Caco-2 (cell line): ENCODE measurements at regions of chr4 and their contacts with region 1.

Region 1: DNA sequence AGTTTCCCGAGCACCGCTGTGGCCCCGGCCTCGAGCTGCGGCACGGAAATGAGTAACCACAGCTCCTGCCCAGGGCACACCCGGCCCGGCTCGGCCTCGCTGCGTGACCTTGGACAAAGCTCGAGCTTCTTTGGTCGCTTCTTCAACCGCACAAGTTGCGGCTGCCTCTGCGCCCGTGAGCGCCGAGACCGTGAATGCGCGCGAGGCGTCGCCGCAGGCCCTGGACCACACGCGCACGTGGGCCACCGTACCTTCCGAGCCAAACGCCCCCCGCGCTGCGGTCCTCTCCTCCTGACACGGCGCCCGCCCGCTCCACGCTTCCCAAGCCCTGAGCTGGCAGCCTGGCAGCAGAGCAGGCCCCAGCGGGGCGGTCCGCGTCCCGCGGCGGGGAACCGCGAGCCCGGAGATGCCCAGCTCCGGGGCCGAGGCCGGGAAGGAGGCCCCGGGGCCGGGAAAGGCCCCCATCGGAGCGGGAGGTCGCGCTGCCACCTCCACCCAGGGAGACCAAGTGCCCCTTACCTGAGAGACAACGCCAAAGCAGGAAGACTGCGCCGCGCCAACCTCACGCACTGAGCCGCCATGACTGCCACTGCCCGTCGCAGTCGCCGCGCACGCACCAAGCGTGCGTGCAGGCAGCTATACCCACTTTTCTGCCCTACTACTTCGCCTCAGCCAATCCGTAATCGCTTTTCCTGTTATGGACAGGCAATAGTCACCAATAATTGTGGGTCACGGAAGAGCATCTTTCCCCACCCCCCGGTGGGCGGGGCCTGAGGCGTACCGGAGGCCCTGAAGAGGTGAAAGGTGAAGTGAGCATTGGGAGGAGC is at the start of gene GRPEL1:
- DNase-seq: peak; percentile 99
- H3K4me3 ChIP-seq: peak within 1 kb of the TSS; percentile 77
- H3K4me3 Mint-ChIP-seq: peak within 1 kb of the TSS; percentile 90
- H3K27ac Mint-ChIP-seq: peak within 1 kb of the TSS; percentile 87
- H3K4me1 ChIP-seq: peaks cover 9% of the 10 kb centered on the region; the same call in 1 of the 2 replicates
- H3K4me1 Mint-ChIP-seq: peaks cover 14% of the 10 kb centered on the region
- H3K27me3 ChIP-seq: no peaks in the 10 kb centered on the region
- H3K27me3 Mint-ChIP-seq: no peaks in the 10 kb centered on the region
- CTCF ChIP-seq: no peak
- total RNA-seq, gene GRPEL1: 47.3 and 51.7 TPM in 2 replicates

Region 2: DNA sequence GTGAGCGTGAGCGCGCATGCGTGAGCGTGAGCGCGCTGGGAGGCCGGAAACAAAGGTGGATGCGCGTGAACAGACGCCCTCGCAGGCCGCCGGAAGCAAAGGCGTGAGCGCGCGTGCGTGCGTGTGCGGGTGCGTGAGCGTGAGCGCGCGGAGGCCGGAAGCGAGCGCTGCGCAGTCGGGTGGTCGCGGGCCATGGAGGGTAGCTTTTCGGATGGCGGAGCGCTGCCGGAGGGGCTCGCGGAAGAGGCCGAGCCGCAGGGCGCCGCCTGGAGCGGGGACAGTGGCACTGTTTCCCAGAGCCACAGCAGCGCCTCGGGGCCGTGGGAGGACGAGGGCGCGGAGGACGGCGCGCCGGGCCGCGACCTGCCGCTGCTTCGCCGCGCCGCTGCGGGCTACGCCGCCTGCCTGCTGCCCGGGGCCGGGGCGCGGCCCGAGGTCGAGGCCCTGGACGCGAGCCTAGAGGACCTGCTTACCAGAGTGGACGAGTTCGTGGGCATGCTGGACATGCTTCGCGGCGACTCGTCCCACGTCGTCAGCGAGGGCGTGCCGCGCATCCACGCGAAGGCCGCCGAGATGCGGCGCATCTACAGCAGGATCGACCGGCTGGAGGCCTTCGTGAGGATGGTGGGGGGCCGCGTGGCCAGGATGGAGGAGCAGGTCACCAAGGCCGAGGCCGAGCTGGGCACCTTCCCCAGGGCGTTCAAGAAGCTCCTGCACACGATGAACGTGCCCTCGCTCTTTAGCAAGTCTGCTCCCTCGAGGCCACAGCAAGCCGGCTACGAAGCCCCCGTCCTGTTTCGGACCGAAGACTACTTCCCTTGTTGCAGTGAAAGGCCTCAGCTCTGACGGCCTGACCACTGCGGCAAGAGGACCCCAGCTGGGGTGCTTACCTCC is 351.4 kb before region 1 on chr4 and contains the start of gene BLOC1S4:
- CTCF ChIA-PET with region 1: interaction called, 4 read pairs
- POLR2A ChIA-PET with region 1: no interaction called
- intact Hi-C with region 1: loop called (anchors 2 kb)
- DNase-seq: peak; percentile 85 to 88
- H3K4me3 ChIP-seq: peak within 1 kb of the TSS; percentile 83
- H3K4me3 Mint-ChIP-seq: peak within 1 kb of the TSS; percentile 96
- H3K27ac Mint-ChIP-seq: peak within 1 kb of the TSS; percentile 91
- H3K4me1 ChIP-seq: peaks cover 3% of the 10 kb centered on the region; the same call in 1 of the 2 replicates
- H3K4me1 Mint-ChIP-seq: no peaks in the 10 kb centered on the region
- H3K27me3 ChIP-seq: no peaks in the 10 kb centered on the region
- H3K27me3 Mint-ChIP-seq: no peaks in the 10 kb centered on the region
- CTCF ChIP-seq: no peak
- total RNA-seq, gene BLOC1S4: 16.6 and 17.2 TPM in 2 replicates

Region 3: DNA sequence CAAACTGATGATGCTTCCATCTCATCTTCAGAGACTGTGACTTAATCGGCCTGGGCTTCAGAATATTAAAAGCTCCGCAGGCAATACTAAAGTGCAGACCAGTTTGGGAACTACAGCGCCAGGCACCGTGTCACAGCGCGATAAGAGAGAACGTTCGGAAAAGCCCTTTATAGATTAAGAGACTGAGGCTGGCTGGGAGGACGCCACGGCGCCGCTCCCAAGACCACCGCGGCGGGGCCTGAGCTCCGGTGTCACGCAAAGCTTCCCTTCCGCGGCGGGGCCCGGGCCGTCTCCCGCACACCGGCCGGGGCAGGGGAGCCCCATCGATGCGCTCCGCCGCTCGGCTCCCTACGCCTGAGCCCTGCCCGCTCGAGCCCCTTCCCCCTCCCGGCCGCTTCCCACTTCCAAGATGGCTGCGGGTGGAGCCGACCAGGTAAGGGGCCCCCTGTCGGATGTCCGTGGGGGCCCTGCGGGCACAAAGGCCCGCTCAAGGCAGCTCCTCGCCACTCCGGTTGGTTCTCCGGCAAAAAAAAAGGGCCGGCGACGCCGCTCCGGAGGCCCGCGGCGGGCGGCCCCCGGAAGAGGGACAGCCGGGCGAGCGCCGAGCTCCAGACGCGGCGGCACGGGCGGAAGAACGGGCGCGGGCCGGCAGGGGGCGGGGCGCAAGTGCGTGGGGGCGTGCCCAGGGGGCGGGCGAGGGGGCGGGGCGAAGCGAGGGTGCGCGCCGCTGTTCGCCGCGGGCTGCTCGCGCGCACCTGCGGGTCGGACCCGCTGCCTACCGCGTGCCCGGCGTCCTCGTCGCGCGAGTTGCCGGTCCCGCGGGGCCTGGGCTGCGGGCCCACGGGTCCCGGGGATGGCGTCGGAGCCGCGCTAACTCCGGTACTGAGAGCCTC is 158.3 kb before region 1 on chr4 and contains the start of gene TBC1D14:
- CTCF ChIA-PET with region 1: interaction called, 5 read pairs
- POLR2A ChIA-PET with region 1: interaction called, 5 read pairs
- intact Hi-C with region 1: loop called (anchors 1 kb)
- DNase-seq: peak; percentile 90
- H3K4me3 ChIP-seq: peak within 1 kb of the TSS; percentile 83
- H3K4me3 Mint-ChIP-seq: peak within 1 kb of the TSS; percentile 94
- H3K27ac Mint-ChIP-seq: peak within 1 kb of the TSS; percentile 89
- H3K4me1 ChIP-seq: peaks cover 23% of the 10 kb centered on the region
- H3K4me1 Mint-ChIP-seq: peaks cover 27% of the 10 kb centered on the region
- H3K27me3 ChIP-seq: no peaks in the 10 kb centered on the region
- H3K27me3 Mint-ChIP-seq: no peaks in the 10 kb centered on the region
- CTCF ChIP-seq: peak in 1 of 2 experiments; percentile 16
- total RNA-seq, gene TBC1D14: 54.0 and 57.6 TPM in 2 replicates

Region 4: GRCh38 chr4:6986781-6987587 is 80.7 kb before region 1 on chr4:
- CTCF ChIA-PET with region 1: interaction called, 3 read pairs
- POLR2A ChIA-PET with region 1: interaction called, 3 read pairs
- intact Hi-C with region 1: loop called (anchors 2 kb)
- DNase-seq: peak; percentile 92 to 96
- H3K4me3 ChIP-seq: peak overlapping the region; percentile 91
- H3K4me3 Mint-ChIP-seq: peak overlapping the region; percentile 84
- H3K27ac Mint-ChIP-seq: peak overlapping the region; percentile 79
- H3K4me1 ChIP-seq: peaks cover 29% of the 10 kb centered on the region
- H3K4me1 Mint-ChIP-seq: peaks cover 30% of the 10 kb centered on the region
- H3K27me3 ChIP-seq: no peaks in the 10 kb centered on the region
- H3K27me3 Mint-ChIP-seq: no peaks in the 10 kb centered on the region
- CTCF ChIP-seq: peak in 1 of 2 experiments; percentile 6

Region 5: DNA sequence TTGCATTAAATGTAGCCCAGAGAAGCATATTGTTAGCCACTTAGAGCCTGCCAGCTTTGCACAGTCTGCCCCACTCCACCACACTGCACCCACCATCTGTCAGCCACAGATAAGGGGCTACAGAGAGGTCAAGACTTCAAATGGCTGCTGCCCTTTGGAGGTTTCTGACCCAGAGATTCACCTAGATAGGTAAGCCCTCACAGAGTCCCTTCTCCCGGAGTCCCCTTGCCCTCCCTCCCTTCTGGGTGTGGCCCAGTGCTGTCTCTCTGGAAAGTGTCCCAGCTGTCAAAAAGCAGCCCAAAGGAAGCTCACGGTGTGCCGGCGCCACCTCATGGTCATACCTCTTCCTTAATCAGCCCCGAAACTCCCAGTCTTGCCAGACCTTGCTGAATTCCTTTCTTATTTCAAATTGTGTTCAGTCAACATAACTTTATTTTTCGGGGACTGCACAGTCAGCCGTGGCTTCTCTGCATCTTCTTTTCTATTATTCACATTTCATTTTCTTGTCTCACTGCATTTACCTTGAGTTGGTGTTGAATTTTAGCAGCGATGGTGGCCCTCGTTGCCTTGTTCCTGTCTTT is 14.3 kb after region 1 on chr4:
- CTCF ChIA-PET with region 1: interaction called, 39 read pairs
- POLR2A ChIA-PET with region 1: interaction called, 4 read pairs
- intact Hi-C with region 1: no loop called
- DNase-seq: peak; percentile 76 to 78
- H3K4me3 ChIP-seq: no peak overlapping the region
- H3K4me3 Mint-ChIP-seq: no peak overlapping the region
- H3K27ac Mint-ChIP-seq: no peak overlapping the region
- H3K4me1 ChIP-seq: no peaks in the 10 kb centered on the region
- H3K4me1 Mint-ChIP-seq: peaks cover 11% of the 10 kb centered on the region
- H3K27me3 ChIP-seq: no peaks in the 10 kb centered on the region
- H3K27me3 Mint-ChIP-seq: no peaks in the 10 kb centered on the region
- CTCF ChIP-seq: peak; percentile 62 to 73